GM10248 (cell line): ENCODE measurements at regions of chr6 and their contacts with region 1.

Region 1: GRCh38 chr6:32047850-32048766 is 9.9 kb downstream of the CYP21A2 start:
- DNase-seq: peak; percentile 80
- CTCF ChIP-seq: peak; percentile 84

Region 2: DNA sequence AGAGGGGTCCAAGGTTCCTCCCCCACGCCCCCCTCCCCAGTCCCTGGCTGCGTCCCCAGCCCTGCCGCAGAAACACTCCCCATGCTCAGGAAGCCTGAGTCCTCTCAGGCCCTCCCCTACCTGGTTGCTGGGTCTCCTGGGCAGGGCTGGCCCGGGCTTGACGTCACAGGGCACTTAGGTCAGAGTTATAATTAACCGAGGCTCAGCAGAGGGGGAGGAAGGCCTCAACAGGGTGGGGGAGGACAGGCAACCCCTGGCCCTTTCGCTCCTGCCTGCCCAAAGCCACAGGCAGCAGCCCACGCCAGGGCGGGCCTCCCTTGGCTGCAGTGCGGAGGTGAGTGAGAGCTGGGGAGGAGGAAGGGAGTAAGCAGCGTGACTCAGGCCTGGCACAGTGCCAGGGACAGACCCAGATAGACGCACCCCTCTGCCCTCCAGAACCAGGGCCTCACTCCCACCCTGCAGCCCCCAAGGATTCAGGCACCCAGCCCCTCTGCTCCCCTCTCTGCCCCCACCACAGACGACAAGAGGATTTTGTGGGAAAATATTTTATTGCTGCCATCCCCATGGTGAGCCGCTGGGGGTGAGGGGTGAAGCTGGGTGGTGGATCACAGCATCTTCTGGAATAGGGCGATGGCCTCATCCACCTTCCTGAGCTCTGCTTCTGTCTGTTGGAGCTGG is 271.0 kb before region 1 on chr6 and contains the start of gene VWA7:
- CTCF ChIA-PET with region 1: no interaction called
- POLR2A ChIA-PET with region 1: no interaction called
- DNase-seq: peak; percentile 93
- CTCF ChIP-seq: no peak

Region 3: DNA sequence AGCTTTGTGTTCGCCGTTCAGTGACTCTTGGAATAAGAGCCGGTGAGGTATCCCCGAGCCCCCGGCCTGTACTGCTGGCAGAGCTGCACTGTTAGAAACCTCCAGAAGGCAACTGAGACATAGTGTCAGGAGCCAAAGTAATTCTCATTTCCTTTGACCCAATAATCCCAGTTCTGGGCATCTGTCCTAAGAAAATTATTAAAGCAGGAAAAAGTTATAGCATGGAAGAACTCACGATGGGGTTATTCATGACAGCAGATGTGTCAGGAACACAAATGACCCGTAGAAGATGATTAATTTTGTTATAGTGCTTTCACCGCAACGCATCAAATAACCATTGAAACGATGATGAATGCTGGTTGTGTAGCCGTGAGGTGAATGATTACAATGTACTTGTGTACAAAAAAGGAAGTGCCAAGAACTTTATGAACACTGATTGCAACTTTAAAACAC is 10.4 kb after region 1 on chr6:
- CTCF ChIA-PET with region 1: interaction called, 13 read pairs
- POLR2A ChIA-PET with region 1: no interaction called
- DNase-seq: no peak
- CTCF ChIP-seq: no peak

Region 4: GRCh38 chr6:32064706-32065105 is 16.6 kb after region 1 on chr6:
- CTCF ChIA-PET with region 1: interaction called, 13 read pairs
- POLR2A ChIA-PET with region 1: no interaction called
- DNase-seq: no peak
- CTCF ChIP-seq: no peak

Region 5: DNA sequence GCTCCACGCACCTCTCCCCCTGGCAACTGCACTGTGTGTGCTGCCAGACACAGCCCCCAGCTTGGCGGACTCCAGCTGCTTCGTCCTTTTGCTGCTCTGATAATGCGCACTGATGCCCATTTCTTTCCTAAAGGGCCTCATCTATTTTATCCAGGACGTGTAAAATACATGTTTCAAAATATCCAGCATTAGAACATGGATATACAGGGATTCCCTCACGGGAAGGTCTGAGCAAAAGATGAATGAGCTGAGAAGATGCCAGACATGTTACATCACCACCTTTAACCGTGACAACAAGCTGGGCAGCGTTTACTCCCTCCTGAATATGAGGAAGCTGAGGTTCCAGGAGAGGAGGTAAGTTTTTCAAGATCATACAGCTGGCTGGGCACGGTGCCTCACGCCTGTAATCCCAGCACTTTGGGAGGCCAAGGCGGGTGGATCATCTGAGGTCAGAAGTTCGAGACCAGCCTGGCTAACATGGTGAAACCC is 28.3 kb after region 1 on chr6:
- CTCF ChIA-PET with region 1: interaction called, 10 read pairs
- POLR2A ChIA-PET with region 1: no interaction called
- DNase-seq: no peak
- CTCF ChIP-seq: no peak

Region 6: DNA sequence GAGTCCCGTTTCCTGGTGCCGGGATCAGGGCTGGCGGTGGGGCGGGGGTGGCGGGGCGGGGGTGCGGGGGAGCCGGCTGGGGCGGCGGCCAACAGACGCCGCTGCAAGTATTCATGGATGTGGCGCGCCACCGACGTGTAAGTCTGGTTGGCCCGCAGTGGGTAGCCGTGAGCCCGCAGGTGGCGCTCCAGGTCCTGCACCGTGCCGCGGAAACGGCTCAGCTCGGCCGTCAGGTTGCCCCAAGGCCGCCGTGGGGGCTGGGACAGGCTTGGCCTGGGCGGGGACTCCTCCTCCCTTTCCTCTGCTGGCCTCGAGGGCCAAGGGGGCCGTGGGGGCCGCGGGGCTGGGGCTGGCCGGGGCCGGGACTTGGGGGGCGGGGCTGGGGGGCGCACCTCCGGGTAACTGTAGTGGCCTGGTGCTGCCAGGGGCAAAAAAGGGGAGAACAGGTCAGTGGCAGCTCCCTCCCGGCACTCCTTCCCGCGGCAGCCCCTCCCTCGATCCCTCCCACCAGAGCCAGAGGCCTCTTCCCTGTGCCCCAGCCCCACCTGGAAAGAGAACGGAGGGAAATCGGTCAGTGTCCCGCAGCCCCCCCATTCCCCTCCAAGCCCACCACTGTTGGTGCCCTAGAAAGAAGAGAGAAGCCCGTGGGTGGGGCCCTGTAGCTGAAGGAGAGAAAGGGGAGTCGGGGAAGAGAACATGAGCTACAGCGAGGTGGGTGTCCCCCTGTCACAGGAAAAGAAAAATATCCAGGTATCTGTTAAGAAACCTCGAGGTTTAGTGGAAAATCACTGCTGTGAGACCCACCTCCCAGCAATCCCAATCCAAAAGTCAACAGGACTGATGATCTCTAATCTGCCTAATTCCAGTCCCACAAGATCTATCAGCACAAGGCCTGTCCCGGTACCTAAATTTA is 39.7 kb after region 1 on chr6:
- CTCF ChIA-PET with region 1: no interaction called
- POLR2A ChIA-PET with region 1: no interaction called
- DNase-seq: peak; percentile 78
- CTCF ChIP-seq: peak; percentile 65